Heart left ventricle (tissue), 16 donors: ENCODE measurements at regions of chr5 and their contacts with region 1.

Region 1: DNA sequence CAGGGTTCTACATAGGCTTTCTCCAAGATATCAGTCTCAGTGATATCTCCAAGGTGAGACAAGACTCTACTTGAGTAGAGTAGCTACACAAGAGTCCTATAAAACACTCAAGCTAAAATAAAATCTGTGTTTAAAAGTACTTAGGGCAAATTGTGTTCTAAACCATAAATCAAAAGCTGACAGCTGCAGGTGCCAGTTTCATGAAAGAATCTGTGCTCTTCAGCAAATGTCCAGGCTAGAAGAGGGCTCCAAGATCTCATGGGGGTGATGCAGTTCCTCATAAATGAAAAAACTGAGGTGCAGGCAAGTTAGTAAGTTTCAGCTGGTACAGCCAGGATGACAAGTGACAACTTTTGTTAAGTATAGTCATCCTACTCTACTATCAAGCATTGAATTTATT is 142.8 kb upstream of the TNPO1 start:
- DNase-seq: no peak
- ATAC-seq: no peak
- H3K4me3 ChIP-seq: no peak overlapping the region
- H3K27ac ChIP-seq: no peak overlapping the region
- H3K4me1 ChIP-seq: no peaks in the 10 kb centered on the region
- H3K27me3 ChIP-seq: no peaks in the 10 kb centered on the region
- CTCF ChIP-seq: no peak
- POLR2A ChIP-seq: no peak

Region 2: GRCh38 chr5:72624641-72625236 is 48.9 kb before region 1 on chr5:
- intact Hi-C with region 1: loop called in 1 of 10 experiments (anchors 10 kb)
- DNase-seq: peak in 2 of 5 donors; percentile 31 to 45
- ATAC-seq: peak in 2 of 4 donors; percentile 37 to 49
- H3K4me3 ChIP-seq: no peak overlapping the region
- H3K27ac ChIP-seq: peak overlapping the region in 1 of 12 donors; percentile 41
- H3K4me1 ChIP-seq: peaks cover 0 to 10% (median 0%) of the 10 kb centered on the region in 12 donors
- H3K27me3 ChIP-seq: no peaks in the 10 kb centered on the region
- CTCF ChIP-seq: no peak
- POLR2A ChIP-seq: no peak

Region 3: GRCh38 chr5:72822944-72823343 is 149.3 kb after region 1 on chr5:
- intact Hi-C with region 1: no loop called
- DNase-seq: no peak
- ATAC-seq: no peak
- H3K4me3 ChIP-seq: no peak overlapping the region
- H3K27ac ChIP-seq: no peak overlapping the region
- H3K4me1 ChIP-seq: peaks cover 0 to 46% (median 28%) of the 10 kb centered on the region in 12 donors
- H3K27me3 ChIP-seq: no peaks in the 10 kb centered on the region
- CTCF ChIP-seq: no peak
- POLR2A ChIP-seq: no peak